GM12878 (cell line): ENCODE measurements at regions of chr5 and their contacts with region 1.

Region 1: GRCh38 chr5:57137401-57137800 is 36.5 kb upstream of the GPBP1 start:
- DNase-seq: no peak
- ATAC-seq: no peak
- H3K4me3 ChIP-seq: no peak overlapping the region
- H3K27ac ChIP-seq: no peak overlapping the region
- H3K4me1 ChIP-seq: no peaks in the 10 kb centered on the region
- H3K27me3 ChIP-seq: no peaks in the 10 kb centered on the region; a peak in 1 of 4 replicates
- CTCF ChIP-seq: no peak
- EP300 ChIP-seq: no peak
- POLR2A ChIP-seq: no peak
- RAD21 ChIP-seq: no peak

Region 2: GRCh38 chr5:55982957-55983381 is 1154.4 kb before region 1 on chr5:
- CTCF ChIA-PET with region 1: no interaction called
- POLR2A ChIA-PET with region 1: interaction called, 11 read pairs
- RAD21 ChIA-PET with region 1: no interaction called
- SMC1A ChIA-PET with region 1: no interaction called
- in situ Hi-C with region 1: no loop called
- intact Hi-C with region 1: no loop called
- DNase-seq: no peak
- ATAC-seq: peak; percentile 28
- H3K4me3 ChIP-seq: no peak overlapping the region
- H3K27ac ChIP-seq: no peak overlapping the region
- H3K4me1 ChIP-seq: peaks cover 1% of the 10 kb centered on the region
- H3K27me3 ChIP-seq: no peaks in the 10 kb centered on the region
- CTCF ChIP-seq: peak in 2 of 3 experiments; percentile 14 to 50; a peak in 3 of 6 replicates
- EP300 ChIP-seq: no peak
- POLR2A ChIP-seq: no peak
- RAD21 ChIP-seq: peak; percentile 38

Region 3: DNA sequence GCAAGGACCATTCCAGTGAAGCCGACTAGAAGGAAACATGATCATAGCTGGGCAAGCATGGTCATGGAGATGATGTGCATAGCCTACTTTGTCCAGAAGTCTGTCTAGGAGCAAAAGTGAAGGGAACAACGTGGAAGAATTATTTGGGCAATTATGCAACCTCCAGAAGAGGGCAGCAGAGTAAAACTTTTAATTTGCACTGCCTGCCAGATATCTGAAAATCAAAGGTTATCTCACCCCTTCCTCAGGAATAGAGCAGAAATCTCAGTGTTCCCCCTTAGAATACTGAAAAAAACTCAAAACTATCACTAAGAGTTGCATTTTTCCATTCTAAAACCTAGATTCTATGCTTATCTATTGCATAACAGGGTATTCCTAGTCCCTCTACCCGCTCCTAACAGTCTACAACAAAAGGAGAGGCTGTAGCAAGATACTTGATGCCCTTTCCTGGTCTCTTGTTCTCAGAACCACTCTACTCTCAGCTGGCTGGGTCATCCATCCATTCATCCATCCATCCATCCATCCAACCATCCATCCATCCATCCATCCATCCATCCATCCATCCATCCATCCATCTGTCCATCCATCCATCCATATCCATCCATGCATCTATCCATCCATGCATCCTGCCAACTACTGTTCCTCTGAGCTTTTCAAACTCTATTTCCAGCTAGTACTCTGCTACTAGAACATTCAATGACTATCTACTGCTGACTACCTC is 236.4 kb before region 1 on chr5:
- CTCF ChIA-PET with region 1: interaction called, 83 read pairs
- POLR2A ChIA-PET with region 1: no interaction called
- RAD21 ChIA-PET with region 1: interaction called, 63 read pairs
- SMC1A ChIA-PET with region 1: interaction called, 45 read pairs
- in situ Hi-C with region 1: loop called (anchors 5 kb)
- intact Hi-C with region 1: loop called (anchors 1 kb)
- DNase-seq: no peak
- ATAC-seq: peak; percentile 88
- H3K4me3 ChIP-seq: no peak overlapping the region
- H3K27ac ChIP-seq: no peak overlapping the region
- H3K4me1 ChIP-seq: no peaks in the 10 kb centered on the region
- H3K27me3 ChIP-seq: no peaks in the 10 kb centered on the region; a peak in 1 of 4 replicates
- CTCF ChIP-seq: peak; percentile 60 to 83 (median 75); a peak in 5 of 6 replicates
- EP300 ChIP-seq: no peak
- POLR2A ChIP-seq: no peak
- RAD21 ChIP-seq: peak; percentile 89

Region 4: DNA sequence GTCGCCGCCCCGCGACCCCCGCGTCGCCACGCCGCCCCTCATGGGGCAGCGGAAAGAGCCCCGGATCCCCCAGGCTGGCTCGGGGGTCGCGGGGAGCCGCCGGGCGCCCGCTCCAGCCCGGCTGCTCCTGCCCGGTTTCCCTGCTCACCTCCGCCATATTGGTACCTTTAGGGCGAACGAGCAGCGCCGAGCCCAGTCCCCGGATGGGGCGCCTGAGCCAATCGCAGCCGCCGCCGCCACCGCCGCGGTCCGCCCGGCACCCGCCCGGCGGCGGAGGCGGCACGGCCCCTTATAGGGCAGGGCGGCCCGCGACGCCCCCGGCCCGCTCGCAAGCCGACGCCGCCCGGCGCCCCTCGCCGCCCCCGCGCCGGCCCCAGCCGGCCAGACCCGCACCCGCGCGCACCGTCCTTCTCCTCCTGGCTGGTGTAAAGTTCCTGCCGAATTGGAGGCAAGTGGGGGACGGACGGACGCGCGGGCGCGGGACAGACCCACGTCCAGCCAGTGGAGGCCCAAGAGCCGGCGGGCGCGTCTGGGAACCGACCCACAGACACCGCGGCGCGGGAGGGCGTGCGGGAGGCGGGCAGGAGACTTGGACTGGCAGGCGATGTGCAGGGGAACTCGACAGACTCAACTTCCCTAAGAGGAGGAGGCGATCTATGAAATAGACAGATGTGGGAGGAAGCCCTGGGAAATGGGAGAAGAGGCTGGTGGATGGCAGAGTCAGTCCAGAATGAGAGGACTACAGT is 185.3 kb before region 1 on chr5 and contains the start of gene MIER3:
- CTCF ChIA-PET with region 1: interaction called, 12 read pairs
- POLR2A ChIA-PET with region 1: interaction called, 6 read pairs
- RAD21 ChIA-PET with region 1: interaction called, 8 read pairs
- SMC1A ChIA-PET with region 1: interaction called, 3 read pairs
- in situ Hi-C with region 1: no loop called
- intact Hi-C with region 1: loop called (anchors 5 kb)
- DNase-seq: no peak
- ATAC-seq: peak; percentile 90
- H3K4me3 ChIP-seq: peak within 1 kb of the TSS; percentile 90
- H3K27ac ChIP-seq: peak within 1 kb of the TSS; percentile 63
- H3K4me1 ChIP-seq: no peaks in the 10 kb centered on the region
- H3K27me3 ChIP-seq: no peaks in the 10 kb centered on the region; a peak in 1 of 4 replicates
- CTCF ChIP-seq: no peak
- EP300 ChIP-seq: no peak
- POLR2A ChIP-seq: peak; percentile 83
- RAD21 ChIP-seq: no peak
- polyA plus RNA-seq, gene MIER3: 2.9 to 3.5 TPM

Region 5: GRCh38 chr5:57067597-57067924 is 69.8 kb before region 1 on chr5:
- CTCF ChIA-PET with region 1: no interaction called
- POLR2A ChIA-PET with region 1: no interaction called
- RAD21 ChIA-PET with region 1: no interaction called
- SMC1A ChIA-PET with region 1: no interaction called
- in situ Hi-C with region 1: no loop called
- intact Hi-C with region 1: no loop called
- DNase-seq: no peak
- ATAC-seq: no peak
- H3K4me3 ChIP-seq: no peak overlapping the region
- H3K27ac ChIP-seq: no peak overlapping the region
- H3K4me1 ChIP-seq: no peaks in the 10 kb centered on the region
- H3K27me3 ChIP-seq: no peaks in the 10 kb centered on the region
- CTCF ChIP-seq: no peak
- EP300 ChIP-seq: no peak
- POLR2A ChIP-seq: no peak
- RAD21 ChIP-seq: no peak

Region 6: GRCh38 chr5:57173185-57174127 is 36.1 kb after region 1 on chr5 and contains the start of gene GPBP1:
- CTCF ChIA-PET with region 1: interaction called, 10 read pairs
- POLR2A ChIA-PET with region 1: interaction called, 7 read pairs
- RAD21 ChIA-PET with region 1: interaction called, 6 read pairs
- SMC1A ChIA-PET with region 1: interaction called, 6 read pairs
- in situ Hi-C with region 1: no loop called
- intact Hi-C with region 1: no loop called
- DNase-seq: peak; percentile 94
- ATAC-seq: peak; percentile 72
- H3K4me3 ChIP-seq: peak within 1 kb of the TSS; percentile 87
- H3K27ac ChIP-seq: peak within 1 kb of the TSS; percentile 99
- H3K4me1 ChIP-seq: no peaks in the 10 kb centered on the region
- H3K27me3 ChIP-seq: no peaks in the 10 kb centered on the region
- CTCF ChIP-seq: no peak
- EP300 ChIP-seq: peak; percentile 68 to 72; a peak in 2 of 4 replicates
- POLR2A ChIP-seq: peak; percentile 77
- RAD21 ChIP-seq: no peak
- polyA plus RNA-seq, gene GPBP1: 27.0 to 32.5 TPM

Region 7: DNA sequence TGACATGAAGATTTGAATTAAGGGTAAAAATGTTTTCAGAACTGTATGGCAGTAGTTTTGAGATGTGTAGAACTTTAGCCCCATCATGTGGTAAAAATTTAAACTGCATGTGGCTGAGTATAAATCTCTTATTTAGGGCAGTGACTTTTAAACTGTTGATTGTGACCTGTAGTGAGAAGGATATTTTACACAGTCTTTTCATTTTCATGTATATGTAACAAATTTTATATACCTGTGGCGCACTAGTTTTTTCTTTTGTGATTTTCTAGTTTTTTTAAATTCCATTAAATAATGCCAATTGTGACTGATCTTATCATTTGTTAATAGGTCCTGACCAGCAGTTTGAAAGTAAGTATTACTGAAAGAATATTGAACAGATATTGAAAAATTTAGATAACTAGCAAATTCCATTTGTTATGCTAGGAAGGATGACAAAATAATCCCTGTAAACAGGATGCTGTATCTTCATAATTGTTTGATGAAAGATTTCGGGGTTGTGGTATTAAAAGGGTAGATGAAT is 83.7 kb after region 1 on chr5:
- CTCF ChIA-PET with region 1: interaction called, 31 read pairs
- POLR2A ChIA-PET with region 1: interaction called, 3 read pairs
- RAD21 ChIA-PET with region 1: interaction called, 25 read pairs
- SMC1A ChIA-PET with region 1: interaction called, 33 read pairs
- in situ Hi-C with region 1: loop called (anchors 5 kb)
- intact Hi-C with region 1: loop called (anchors 1 kb)
- DNase-seq: peak; percentile 42
- ATAC-seq: peak; percentile 82
- H3K4me3 ChIP-seq: no peak overlapping the region
- H3K27ac ChIP-seq: no peak overlapping the region
- H3K4me1 ChIP-seq: no peaks in the 10 kb centered on the region
- H3K27me3 ChIP-seq: no peaks in the 10 kb centered on the region
- CTCF ChIP-seq: peak; percentile 66 to 75 (median 67)
- EP300 ChIP-seq: no peak
- POLR2A ChIP-seq: no peak
- RAD21 ChIP-seq: peak; percentile 93